BJ (cell line): ENCODE measurements at regions of chr9 and their contacts with region 1.

Region 1: GRCh38 chr9:34403554-34404380 is 27.1 kb upstream of the MYORG start:
- DNase-seq: no peak
- H3K4me3 ChIP-seq: no peak overlapping the region
- H3K27me3 ChIP-seq: no peaks in the 10 kb centered on the region
- CTCF ChIP-seq: peak; percentile 98

Region 2: GRCh38 chr9:34376596-34377403 is 27.0 kb before region 1 on chr9 and contains the start of gene MYORG:
- CTCF ChIA-PET with region 1: interaction called, 28 read pairs
- POLR2A ChIA-PET with region 1: no interaction called
- DNase-seq: peak; percentile 50
- H3K4me3 ChIP-seq: peak within 1 kb of the TSS; percentile 57
- H3K27me3 ChIP-seq: peaks cover 7% of the 10 kb centered on the region
- CTCF ChIP-seq: no peak
- polyA plus RNA-seq, gene MYORG: 0.21 and 0.22 TPM in 2 replicates

Region 3: GRCh38 chr9:34392511-34392910 is 11.3 kb before region 1 on chr9:
- CTCF ChIA-PET with region 1: interaction called, 30 read pairs
- POLR2A ChIA-PET with region 1: interaction called, 3 read pairs
- DNase-seq: no peak
- H3K4me3 ChIP-seq: no peak overlapping the region
- H3K27me3 ChIP-seq: no peaks in the 10 kb centered on the region
- CTCF ChIP-seq: no peak

Region 4: DNA sequence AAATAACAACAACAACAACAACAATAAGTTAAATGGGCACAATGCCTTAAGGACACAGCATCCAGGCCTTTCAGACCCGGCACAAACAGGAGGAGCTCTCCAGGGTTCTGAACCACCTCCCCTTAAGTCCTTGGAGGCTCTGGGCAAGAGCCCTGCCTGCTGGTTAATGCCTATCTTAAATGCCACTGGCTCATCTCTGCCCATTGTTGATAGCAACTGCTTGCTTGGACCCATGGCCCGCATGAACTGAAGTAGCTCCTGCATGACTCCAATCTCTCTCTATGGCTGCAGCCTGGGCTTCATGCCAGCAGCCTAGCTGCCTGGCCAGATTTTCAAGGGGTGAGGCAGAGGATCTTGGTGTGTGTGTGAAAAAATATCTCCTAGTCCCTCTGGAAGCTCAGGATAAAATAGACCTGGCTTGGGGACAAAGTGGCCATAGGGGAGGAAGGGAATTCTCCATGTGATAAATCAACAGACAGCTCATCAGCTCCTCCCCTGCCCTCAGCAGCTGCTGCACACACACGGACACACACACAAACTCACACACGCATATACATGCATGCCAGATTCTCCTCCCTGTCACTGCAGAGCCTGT is 27.2 kb after region 1 on chr9:
- CTCF ChIA-PET with region 1: interaction called, 39 read pairs
- POLR2A ChIA-PET with region 1: no interaction called
- DNase-seq: no peak
- H3K4me3 ChIP-seq: no peak overlapping the region
- H3K27me3 ChIP-seq: no peaks in the 10 kb centered on the region
- CTCF ChIP-seq: no peak

Region 5: DNA sequence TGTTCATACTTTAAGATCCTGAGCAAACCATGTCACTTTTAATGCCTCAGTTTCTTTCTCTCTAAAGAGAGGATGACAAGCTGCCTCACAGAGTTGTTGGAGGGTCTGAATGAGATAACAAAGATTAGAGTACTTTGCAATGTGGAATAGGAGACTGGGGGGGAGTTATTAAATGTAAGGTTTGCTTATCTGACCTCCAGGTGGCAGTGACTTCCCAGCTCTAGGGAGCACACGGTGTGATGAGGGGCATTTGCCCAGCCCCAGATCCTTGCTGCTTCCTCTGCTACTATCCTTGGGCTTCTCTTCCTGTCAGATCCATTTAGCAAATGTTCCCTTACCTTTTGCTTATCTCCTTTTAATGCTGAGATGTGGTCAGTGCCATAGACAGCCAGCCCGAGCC is 88.3 kb after region 1 on chr9:
- CTCF ChIA-PET with region 1: interaction called, 22 read pairs
- POLR2A ChIA-PET with region 1: no interaction called
- DNase-seq: no peak
- H3K4me3 ChIP-seq: no peak overlapping the region
- H3K27me3 ChIP-seq: peaks cover 3% of the 10 kb centered on the region; the same call in 1 of the 2 replicates
- CTCF ChIP-seq: no peak

Region 6: GRCh38 chr9:34603610-34604231 is 200.0 kb after region 1 on chr9:
- CTCF ChIA-PET with region 1: interaction called, 26 read pairs
- POLR2A ChIA-PET with region 1: no interaction called
- DNase-seq: no peak
- H3K4me3 ChIP-seq: no peak overlapping the region
- H3K27me3 ChIP-seq: peaks cover 4% of the 10 kb centered on the region
- CTCF ChIP-seq: peak; percentile 88